HCT116 (cell line): ENCODE measurements at regions of chr9 and their contacts with region 1.

Region 1: DNA sequence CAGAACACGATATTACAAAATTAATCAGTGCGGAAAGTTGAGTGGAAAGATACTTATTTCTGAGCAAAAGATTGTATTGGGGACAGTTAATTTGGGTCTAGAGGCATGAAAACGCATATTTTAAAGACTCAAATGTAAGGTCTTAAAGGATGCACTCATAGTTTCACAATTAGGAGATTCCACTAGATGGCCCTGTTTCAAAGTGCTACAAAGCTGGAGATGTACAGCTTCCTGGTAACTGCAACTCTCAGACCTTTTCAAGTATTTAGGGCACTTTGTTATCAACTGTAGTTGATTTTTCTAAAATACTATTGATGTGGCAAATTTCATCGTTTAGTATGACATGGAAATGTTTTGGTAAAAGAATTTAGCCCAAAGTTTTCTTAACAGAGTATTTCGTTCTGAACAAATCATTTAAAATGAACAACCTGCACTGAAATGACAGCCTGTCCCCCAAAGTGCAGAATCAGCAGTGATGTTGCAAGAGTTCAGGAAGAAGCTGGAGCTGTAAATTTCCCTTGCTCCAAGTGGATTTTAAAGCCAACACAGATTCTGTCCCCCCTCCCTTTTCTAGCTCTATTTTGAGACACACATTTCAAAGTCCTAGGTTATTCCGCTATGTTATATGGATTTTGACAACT is 16.2 kb upstream of the NDUFB6 start:
- DNase-seq: peak; percentile 38
- ATAC-seq: peak; percentile 84
- H3K4me3 ChIP-seq: no peak overlapping the region
- H3K27ac ChIP-seq: no peak overlapping the region
- H3K4me1 ChIP-seq: no peaks in the 10 kb centered on the region
- H3K27me3 ChIP-seq: no peaks in the 10 kb centered on the region
- CTCF ChIP-seq: peak; percentile 59 to 73 (median 66); a peak in 5 of 6 replicates
- POLR2A ChIP-seq: no peak
- RAD21 ChIP-seq: peak; percentile 83

Region 2: DNA sequence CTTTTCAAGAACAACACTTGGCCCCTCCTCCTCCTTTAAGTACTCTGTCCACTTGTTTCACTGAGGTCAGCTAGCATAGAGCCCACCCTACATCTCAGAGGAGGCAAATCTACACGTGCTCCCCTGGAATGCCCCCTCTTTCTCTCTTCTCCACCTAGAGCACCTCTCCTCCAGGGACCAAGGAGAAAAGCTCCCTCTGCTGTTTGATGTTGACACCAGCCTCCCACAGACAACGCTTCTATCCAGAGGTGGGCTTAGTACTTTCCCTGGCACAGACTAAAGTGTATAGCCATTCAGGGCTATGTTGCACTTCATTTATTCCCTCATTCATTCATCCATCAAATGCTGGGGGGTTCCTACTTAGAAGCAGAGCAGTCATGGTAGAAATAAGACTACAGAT is 114.4 kb after region 1 on chr9:
- CTCF ChIA-PET with region 1: interaction called, 10 read pairs
- POLR2A ChIA-PET with region 1: no interaction called
- RAD21 ChIA-PET with region 1: interaction called in 1 of 2 experiments, 4 read pairs
- intact Hi-C with region 1: loop called (anchors 1 kb)
- DNase-seq: no peak
- ATAC-seq: peak; percentile 78
- H3K4me3 ChIP-seq: no peak overlapping the region
- H3K27ac ChIP-seq: no peak overlapping the region
- H3K4me1 ChIP-seq: peaks cover 6 to 9% of the 10 kb centered on the region in 2 experiments; a peak in 3 of 4 replicates
- H3K27me3 ChIP-seq: peaks cover 15% of the 10 kb centered on the region; the same call in 1 of the 2 replicates
- CTCF ChIP-seq: peak; percentile 52 to 57 (median 56); a peak in 5 of 6 replicates
- POLR2A ChIP-seq: no peak
- RAD21 ChIP-seq: peak; percentile 65

Region 3: DNA sequence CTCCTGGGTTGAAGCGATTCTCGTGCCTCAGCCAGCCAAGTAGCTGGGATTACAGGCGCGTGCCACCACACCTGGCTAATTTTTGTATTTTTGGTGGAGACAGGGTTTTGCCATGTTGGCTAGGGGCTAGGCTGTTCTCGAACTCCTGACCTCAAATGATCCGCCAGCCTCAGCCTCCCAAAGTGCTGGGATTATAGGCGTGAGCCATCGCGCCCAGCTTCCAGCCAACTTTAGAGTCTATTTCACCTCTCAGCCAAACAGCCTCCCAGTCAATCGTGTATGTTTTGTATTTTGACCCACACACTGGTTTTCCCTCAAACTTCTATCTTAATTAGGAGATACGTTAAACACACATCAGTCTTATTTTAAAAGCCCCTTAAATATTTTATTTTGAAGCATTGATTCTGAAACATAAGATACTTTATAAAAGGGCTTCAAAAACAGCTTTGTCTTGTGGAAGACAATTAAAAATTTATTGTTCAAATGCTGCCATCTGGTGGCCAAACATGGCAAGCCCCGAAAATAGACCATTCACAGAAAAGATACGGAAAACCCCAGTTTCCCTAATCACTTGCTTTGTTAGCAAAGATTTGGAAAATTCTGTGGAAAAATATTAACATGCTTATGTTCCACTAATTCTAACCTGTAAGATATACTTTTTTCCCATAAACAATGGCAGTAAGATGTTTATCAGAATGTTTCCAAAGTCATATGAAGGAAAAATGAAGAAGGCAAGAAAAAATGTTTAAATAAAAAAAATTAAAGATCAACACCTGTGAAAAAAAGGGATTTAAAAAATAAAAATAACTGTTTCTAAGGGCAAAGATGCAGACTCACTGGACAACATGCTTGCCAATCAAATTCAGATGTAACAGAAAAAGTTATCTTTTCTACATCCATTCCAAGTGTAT is 379.2 kb after region 1 on chr9:
- CTCF ChIA-PET with region 1: interaction called, 66 read pairs
- POLR2A ChIA-PET with region 1: no interaction called
- RAD21 ChIA-PET with region 1: interaction called in 1 of 2 experiments, 11 read pairs
- intact Hi-C with region 1: loop called (anchors 2 kb)
- DNase-seq: peak; percentile 6
- ATAC-seq: no peak
- H3K4me3 ChIP-seq: no peak overlapping the region
- H3K27ac ChIP-seq: no peak overlapping the region
- H3K4me1 ChIP-seq: no peaks in the 10 kb centered on the region
- H3K27me3 ChIP-seq: no peaks in the 10 kb centered on the region
- CTCF ChIP-seq: peak; percentile 73 to 89 (median 82)
- POLR2A ChIP-seq: no peak
- RAD21 ChIP-seq: peak; percentile 78

Region 4: GRCh38 chr9:33007755-33008154 is 418.6 kb after region 1 on chr9:
- CTCF ChIA-PET with region 1: no interaction called
- POLR2A ChIA-PET with region 1: no interaction called
- RAD21 ChIA-PET with region 1: no interaction called
- intact Hi-C with region 1: no loop called
- DNase-seq: no peak
- ATAC-seq: no peak
- H3K4me3 ChIP-seq: no peak overlapping the region
- H3K27ac ChIP-seq: no peak overlapping the region
- H3K4me1 ChIP-seq: no peaks in the 10 kb centered on the region
- H3K27me3 ChIP-seq: no peaks in the 10 kb centered on the region
- CTCF ChIP-seq: no peak
- POLR2A ChIP-seq: no peak
- RAD21 ChIP-seq: no peak